Activated CD8-positive, alpha-beta memory T cell treated with anti-CD3 and anti-CD28 coated beads, Interleukin-2, amount 10 ng/mL, durations not matched to agents 7 days and 5 days (primary cell): ENCODE measurements at regions of chr10 and their contacts with region 1.

Region 1: DNA sequence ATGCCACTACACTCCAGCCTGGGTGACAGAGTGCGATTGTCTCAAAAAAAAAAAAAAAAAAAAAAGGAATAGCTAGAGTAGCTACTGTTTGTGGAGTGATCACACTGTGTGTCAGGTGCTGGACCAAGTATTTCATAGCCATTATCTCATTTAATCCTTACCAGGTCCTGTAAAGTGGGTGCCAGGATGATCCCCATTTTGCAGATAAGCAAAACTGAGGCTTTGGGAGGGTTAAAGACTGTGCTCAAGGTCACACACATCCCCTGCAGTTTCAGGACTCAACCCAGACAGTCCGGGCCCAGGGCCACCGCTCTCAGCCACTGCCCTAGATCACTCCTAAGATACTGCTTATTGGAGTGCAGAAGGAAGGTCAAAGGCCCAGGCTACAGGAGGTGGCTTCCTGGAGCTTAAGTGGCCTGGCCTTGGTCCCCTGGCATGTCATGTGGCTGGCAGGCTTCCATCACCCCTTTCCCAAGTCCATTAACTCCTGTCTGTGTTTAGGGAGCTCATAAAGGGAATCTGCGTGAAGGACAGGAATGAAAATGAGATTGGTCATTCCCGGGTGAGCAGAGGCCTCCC is 12.4 kb upstream of the WBP1L start:
- DNase-seq: no peak
- ATAC-seq: no peak
- H3K4me3 Mint-ChIP-seq: no peak overlapping the region
- H3K27ac Mint-ChIP-seq: no peak overlapping the region
- H3K4me1 Mint-ChIP-seq: peaks cover 16% of the 10 kb centered on the region
- H3K27me3 Mint-ChIP-seq: no peaks in the 10 kb centered on the region

Region 2: GRCh38 chr10:102743588-102744373 is 12.5 kb after region 1 on chr10 and contains the start of gene WBP1L:
- CTCF ChIA-PET with region 1: interaction called, 14 read pairs
- DNase-seq: peak; percentile 97
- ATAC-seq: peak; percentile 97
- H3K4me3 Mint-ChIP-seq: peak within 1 kb of the TSS; percentile 96
- H3K27ac Mint-ChIP-seq: peak within 1 kb of the TSS; percentile 90
- H3K4me1 Mint-ChIP-seq: peaks cover 44% of the 10 kb centered on the region
- H3K27me3 Mint-ChIP-seq: no peaks in the 10 kb centered on the region
- total RNA-seq, gene WBP1L: 23.9 to 24.6 TPM

Region 3: GRCh38 chr10:102785621-102786217 is 54.4 kb after region 1 on chr10:
- CTCF ChIA-PET with region 1: no interaction called
- DNase-seq: no peak
- ATAC-seq: no peak
- H3K4me3 Mint-ChIP-seq: no peak overlapping the region
- H3K27ac Mint-ChIP-seq: no peak overlapping the region
- H3K4me1 Mint-ChIP-seq: peaks cover 10% of the 10 kb centered on the region
- H3K27me3 Mint-ChIP-seq: no peaks in the 10 kb centered on the region